AG04449 (cell line): ENCODE measurements at regions of chr10 and their contacts with region 1.

Region 1: GRCh38 chr10:93482145-93482834 is at the start of gene MYOF:
- DNase-seq: peak; percentile 83
- H3K4me3 ChIP-seq: peak within 1 kb of the TSS; percentile 62
- CTCF ChIP-seq: peak; percentile 57

Region 2: GRCh38 chr10:93080350-93081046 is 401.8 kb before region 1 on chr10:
- CTCF ChIA-PET with region 1: interaction called, 12 read pairs
- POLR2A ChIA-PET with region 1: no interaction called
- DNase-seq: no peak
- H3K4me3 ChIP-seq: no peak overlapping the region; the same call in 1 of the 2 replicates
- CTCF ChIP-seq: peak; percentile 85

Region 3: GRCh38 chr10:93309062-93309461 is 173.2 kb before region 1 on chr10:
- CTCF ChIA-PET with region 1: no interaction called
- POLR2A ChIA-PET with region 1: no interaction called
- DNase-seq: no peak
- H3K4me3 ChIP-seq: no peak overlapping the region
- CTCF ChIP-seq: no peak

Region 4: DNA sequence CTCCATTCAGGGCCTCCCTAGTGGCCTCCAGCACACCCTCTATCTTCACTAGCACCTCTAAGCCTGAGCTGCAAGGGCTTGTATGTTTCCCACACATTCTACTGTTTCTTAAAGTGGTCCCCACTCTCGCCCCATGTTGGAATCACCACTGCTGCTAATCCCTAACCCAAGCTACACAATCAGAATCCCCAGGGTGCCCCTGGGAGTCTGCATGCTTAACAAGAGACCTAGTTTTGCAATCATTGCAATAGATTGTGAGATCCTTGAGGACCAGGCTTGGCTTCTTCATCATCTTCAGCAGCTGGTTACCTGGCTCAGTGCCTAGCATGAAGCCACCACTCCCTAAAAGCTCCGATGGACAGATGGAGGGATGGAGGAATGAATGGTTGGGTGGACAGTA is 114.1 kb before region 1 on chr10:
- CTCF ChIA-PET with region 1: interaction called, 25 read pairs
- POLR2A ChIA-PET with region 1: no interaction called
- DNase-seq: no peak
- H3K4me3 ChIP-seq: no peak overlapping the region
- CTCF ChIP-seq: no peak

Region 5: DNA sequence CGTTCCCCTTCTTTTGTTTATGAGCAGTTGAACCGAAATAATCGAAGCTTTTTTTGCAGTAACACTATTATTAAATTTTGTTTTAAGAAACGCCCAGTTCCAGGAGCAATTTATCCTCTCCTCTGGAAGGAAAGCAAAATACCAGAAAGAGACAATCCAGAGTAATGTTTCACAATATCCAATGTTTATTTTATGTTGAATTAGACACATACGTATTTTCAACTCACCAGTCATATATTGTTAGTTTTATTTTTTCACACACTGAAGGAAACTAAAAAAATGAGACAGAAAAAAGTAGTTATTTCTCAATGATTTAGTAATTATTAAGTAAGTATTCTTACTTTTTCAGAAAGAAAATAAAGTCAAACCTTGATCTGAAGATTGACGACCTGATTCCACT is 85.3 kb before region 1 on chr10:
- CTCF ChIA-PET with region 1: interaction called, 12 read pairs
- POLR2A ChIA-PET with region 1: no interaction called
- DNase-seq: no peak
- H3K4me3 ChIP-seq: no peak overlapping the region
- CTCF ChIP-seq: no peak

Region 6: GRCh38 chr10:93420091-93420490 is 62.2 kb before region 1 on chr10:
- CTCF ChIA-PET with region 1: interaction called, 23 read pairs
- POLR2A ChIA-PET with region 1: no interaction called
- DNase-seq: no peak
- H3K4me3 ChIP-seq: no peak overlapping the region
- CTCF ChIP-seq: no peak

Region 7: DNA sequence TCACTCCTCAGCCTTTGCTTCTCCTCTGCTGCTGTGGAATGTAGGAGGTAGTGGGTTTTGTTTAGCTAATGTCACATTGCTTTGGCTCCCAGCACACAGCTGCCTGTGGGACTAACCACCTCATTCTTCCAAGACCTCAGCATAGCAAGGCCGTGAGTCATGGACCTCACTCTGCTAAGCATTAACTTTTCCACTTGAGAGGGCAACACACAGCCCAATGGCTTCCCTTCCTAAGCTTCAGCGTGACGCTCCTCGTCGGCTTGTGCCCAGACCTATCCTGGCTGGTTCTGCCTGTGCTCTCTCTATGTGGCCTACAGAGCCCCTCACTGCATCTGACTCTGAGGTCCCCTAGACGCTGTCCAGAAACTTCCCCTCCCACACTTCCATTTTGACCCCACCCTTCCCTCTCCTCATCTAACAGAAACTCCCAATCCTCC is 23.5 kb before region 1 on chr10:
- CTCF ChIA-PET with region 1: interaction called, 25 read pairs
- POLR2A ChIA-PET with region 1: interaction called, 10 read pairs
- DNase-seq: peak; percentile 99
- H3K4me3 ChIP-seq: no peak overlapping the region
- CTCF ChIP-seq: no peak

Region 8: GRCh38 chr10:93566435-93567276 is 84.4 kb after region 1 on chr10 and contains the start of gene FFAR4:
- CTCF ChIA-PET with region 1: no interaction called
- POLR2A ChIA-PET with region 1: no interaction called
- DNase-seq: no peak
- H3K4me3 ChIP-seq: no peak within 1 kb of the TSS
- CTCF ChIP-seq: no peak